ENCODE measurements at regions of chr2 and their contacts with region 1.

Region 1: GRCh38 chr2:106931717-106932335 is 45.9 kb upstream of the ST6GAL2 start:
- DNase-seq: no peak
- H3K4me3 ChIP-seq: no peak overlapping the region
- H3K27ac ChIP-seq: no peak overlapping the region
- H3K4me1 ChIP-seq: no peaks in the 10 kb centered on the region
- H3K27me3 ChIP-seq: no peaks in the 10 kb centered on the region
- CTCF ChIP-seq: no peak
- POLR2A ChIP-seq: no peak

Region 2: DNA sequence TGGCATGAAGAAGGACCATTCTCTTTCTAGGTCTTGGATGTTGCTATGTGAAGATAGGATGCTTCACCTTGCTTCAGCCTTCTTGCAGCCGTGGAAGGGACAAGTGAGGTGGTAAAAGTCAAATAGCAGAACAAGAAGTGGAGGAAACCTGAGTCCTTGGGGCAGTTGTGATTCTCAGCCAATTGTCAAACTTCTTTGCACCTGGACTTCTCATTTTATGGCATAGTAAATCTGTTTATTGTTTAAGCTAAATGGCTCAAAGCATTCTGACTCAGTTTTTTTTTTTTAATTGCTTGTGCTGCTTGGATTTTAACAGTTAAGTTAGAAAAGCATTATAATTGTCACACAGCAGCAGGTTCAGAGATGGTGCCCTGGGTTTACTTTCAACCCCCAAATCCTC is 12.8 kb before region 1 on chr2:
- intact Hi-C with region 1: loop called (anchors 2 kb)
- DNase-seq: no peak
- H3K4me3 ChIP-seq: no peak overlapping the region
- H3K27ac ChIP-seq: no peak overlapping the region
- H3K4me1 ChIP-seq: no peaks in the 10 kb centered on the region
- H3K27me3 ChIP-seq: no peaks in the 10 kb centered on the region
- CTCF ChIP-seq: no peak
- POLR2A ChIP-seq: no peak